GM18951 (cell line): ENCODE measurements at regions of chr15 and their contacts with region 1.

Region 1: DNA sequence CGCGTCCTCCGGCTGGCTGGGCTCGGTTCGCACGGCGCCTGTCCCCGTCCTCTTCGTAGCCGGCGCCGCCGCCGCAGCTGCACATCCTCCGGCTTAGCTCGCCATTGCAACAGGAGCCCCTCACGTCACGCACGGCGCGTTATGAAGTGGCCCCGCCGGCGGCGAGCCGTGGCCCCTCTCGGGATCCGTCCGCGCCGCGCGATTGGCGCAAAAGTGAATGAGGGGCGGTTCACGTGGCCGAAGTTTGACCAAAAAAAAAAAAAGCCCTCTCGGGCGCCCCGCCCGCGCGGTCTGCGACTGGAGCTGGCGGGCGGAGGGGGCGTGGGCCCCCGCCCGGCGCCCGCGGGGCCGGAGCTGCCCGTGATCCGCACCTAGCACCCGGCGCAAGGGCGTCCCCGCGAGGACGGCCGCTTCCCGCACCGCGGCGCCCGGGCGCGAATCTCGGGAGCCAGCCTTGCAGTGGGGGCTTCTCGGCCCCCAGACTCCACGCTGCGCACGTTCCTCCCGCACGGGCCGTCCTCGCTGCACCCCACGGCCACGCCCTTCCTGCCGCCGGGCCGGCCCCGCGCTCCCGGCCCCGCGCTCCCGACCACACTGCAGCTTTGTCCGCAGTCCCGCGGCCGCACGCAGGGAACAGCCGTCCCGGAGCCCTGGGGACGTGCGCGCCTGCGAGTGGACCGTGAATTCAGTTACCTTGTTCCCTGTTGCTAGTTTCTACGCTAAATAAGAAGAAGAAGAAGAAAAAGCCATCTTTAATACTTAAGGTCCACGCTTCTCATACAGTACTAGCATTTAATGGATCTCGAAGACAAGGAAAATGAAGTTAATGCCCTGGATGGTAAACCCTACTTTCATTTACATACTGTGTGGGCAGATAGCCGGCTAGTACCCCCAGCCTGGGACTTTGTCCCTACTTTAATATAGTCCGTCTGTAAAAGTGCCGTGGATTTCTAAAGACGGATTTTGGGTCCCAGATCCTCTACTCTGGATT is at the start of gene CHSY1:
- POLR2A ChIP-seq: peak; percentile 81

Region 2: GRCh38 chr15:100602064-100602822 is 649.9 kb before region 1 on chr15 and contains the starts of genes ASB7 and LINS1:
- in situ Hi-C with region 1: loop called (anchors 25 kb)
- POLR2A ChIP-seq: peak; percentile 58

Region 3: DNA sequence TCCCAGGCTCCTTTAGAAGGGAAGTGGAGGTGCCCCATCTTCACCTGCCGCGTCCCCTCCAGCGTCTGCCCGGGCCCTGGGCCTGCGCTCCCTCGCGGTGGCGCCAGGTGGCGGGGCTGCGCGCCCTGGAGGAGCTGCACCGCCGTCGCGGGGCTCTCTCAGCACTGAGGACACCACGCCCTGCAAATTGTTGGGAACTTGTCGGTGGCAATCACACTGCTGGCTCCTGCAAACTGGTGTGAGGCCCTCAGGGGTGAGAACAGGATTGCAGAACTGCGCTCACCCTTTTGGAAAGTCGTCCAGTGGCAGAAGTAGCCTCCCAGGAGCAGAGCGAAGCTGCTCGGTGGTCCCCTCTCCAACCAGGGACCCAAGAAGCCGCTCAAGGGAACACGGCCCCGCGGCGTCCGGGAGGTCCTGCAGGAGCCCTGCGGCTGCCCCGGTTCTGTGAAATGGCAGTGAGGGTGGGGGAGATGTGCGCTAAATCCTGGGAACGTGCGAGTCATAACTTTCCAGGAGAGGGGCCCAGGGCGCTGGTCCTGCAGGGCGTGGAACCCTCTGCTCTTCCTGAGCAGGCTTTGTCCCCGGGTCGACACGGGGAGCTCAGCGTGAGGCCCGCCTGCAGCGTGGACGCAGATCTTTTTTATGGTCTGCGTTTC is 334.0 kb before region 1 on chr15:
- in situ Hi-C with region 1: loop called (anchors 25 kb)
- POLR2A ChIP-seq: peak; percentile 51

Region 4: GRCh38 chr15:101014921-101015841 is 236.9 kb before region 1 on chr15:
- in situ Hi-C with region 1: loop called (anchors 10 kb)
- POLR2A ChIP-seq: no peak

Region 5: GRCh38 chr15:101127506-101128076 is 124.5 kb before region 1 on chr15:
- in situ Hi-C with region 1: no loop called
- POLR2A ChIP-seq: peak; percentile 31

Region 6: DNA sequence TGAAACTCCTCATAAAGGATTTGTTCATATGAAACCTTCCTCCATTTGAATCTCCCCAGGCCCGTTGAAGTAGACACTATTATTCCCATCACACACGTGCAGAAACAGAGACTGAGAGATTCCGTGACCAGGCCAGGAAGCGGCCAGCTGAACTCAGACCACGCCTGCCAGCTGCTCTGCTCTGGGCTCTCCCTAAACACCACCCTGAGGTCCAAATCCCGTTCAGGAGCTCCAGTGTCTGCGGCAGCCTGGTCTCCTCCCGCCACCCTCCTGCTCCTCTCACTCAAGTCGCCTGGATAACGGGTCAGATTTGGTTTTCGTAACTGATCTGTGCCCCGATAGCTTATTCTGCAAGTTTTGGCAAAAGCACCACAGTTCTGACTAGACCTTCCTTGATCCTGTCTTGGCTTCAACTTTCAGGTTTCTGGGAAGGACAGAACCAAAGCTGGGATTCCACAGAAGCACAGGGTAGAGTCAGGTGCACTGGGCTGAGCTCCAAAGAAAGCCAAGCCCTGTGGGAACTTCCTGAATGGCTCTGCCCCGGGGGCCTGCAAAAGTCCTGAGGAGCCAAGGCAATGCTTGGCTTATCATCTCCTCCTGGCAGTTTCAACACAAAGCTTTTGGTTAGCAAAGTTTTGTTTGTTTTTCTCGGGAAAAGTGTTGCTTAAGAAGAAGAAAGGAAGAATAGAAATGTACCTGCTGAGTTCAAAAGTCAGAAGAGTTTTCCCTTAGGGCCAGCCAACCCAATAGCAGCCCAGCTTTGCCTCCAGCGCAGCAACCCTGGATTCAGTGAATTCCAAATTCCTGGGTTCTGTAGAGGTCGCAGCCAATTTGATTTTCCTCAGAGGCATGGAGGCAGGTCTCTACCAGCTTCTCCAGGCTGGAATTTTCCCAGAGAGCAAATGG is 96.8 kb after region 1 on chr15:
- in situ Hi-C with region 1: no loop called
- POLR2A ChIP-seq: no peak